MCF 10A (cell line): ENCODE measurements at regions of chr12 and their contacts with region 1.

Region 1: GRCh38 chr12:109428037-109428629 is 49.0 kb downstream of the KCTD10 start:
- DNase-seq: peak; percentile 79
- H3K4me3 Mint-ChIP-seq: no peak overlapping the region
- H3K27ac Mint-ChIP-seq: no peak overlapping the region
- H3K4me1 Mint-ChIP-seq: peaks cover 7% of the 10 kb centered on the region
- H3K27me3 Mint-ChIP-seq: peaks cover 16% of the 10 kb centered on the region
- CTCF ChIP-seq: peak; percentile 91

Region 2: GRCh38 chr12:108821407-108822397 is 606.4 kb before region 1 on chr12:
- CTCF ChIA-PET with region 1: no interaction called
- POLR2A ChIA-PET with region 1: no interaction called
- intact Hi-C with region 1: no loop called
- DNase-seq: peak; percentile 60
- H3K4me3 Mint-ChIP-seq: no peak overlapping the region
- H3K27ac Mint-ChIP-seq: peak overlapping the region; percentile 72
- H3K4me1 Mint-ChIP-seq: peaks cover 16% of the 10 kb centered on the region
- H3K27me3 Mint-ChIP-seq: no peaks in the 10 kb centered on the region
- CTCF ChIP-seq: no peak

Region 3: DNA sequence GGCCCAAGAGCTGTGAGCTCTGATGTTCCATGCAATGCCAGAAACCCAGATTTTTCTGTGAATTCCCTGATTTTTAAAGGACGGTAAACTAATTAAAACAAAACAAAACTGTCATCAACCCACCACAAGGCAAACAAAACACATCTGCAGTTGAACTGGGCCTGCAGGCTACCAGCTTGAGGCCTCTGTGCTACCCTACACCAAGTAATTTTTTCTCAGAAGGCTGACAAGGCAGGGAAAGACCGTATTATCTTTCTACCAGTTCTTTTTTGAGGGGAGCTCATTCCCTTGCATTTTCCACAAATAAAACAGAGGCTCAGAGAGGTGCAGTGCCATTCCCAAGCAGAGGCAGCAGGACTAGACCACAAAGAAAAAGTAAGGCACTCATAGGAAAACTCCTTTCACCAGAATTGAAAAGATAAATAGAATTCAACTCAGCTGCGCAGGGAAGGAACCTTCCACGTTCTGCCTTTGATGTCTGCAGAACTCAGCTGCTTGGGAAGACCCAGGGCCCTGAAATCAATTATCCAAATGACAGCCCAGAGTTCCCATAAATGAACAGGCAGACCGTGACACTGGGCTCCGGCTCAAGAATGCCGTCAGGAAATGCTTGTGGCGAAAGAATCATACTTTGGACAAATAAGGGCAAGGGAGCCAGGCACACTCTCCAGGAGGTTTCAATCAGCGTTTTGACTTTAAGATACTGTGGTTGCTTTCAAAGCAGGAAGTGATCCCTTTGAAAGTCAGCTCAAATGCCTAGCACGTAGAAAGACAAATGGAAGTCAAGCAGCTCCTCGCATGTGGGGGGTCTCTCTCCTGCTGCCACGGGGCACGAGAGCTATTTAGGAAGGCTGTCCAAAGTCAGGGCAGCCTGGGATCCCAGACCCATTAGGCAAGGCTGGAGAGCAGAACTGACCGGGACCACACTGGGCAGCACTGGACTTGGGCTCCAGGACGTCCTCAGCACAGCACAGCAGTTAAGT is 34.9 kb after region 1 on chr12:
- CTCF ChIA-PET with region 1: interaction called, 13 read pairs
- POLR2A ChIA-PET with region 1: interaction called, 18 read pairs
- intact Hi-C with region 1: loop called (anchors 1 kb)
- DNase-seq: peak; percentile 91
- H3K4me3 Mint-ChIP-seq: peak overlapping the region; percentile 41
- H3K27ac Mint-ChIP-seq: peak overlapping the region; percentile 97
- H3K4me1 Mint-ChIP-seq: peaks cover 52% of the 10 kb centered on the region
- H3K27me3 Mint-ChIP-seq: no peaks in the 10 kb centered on the region
- CTCF ChIP-seq: no peak

Region 4: DNA sequence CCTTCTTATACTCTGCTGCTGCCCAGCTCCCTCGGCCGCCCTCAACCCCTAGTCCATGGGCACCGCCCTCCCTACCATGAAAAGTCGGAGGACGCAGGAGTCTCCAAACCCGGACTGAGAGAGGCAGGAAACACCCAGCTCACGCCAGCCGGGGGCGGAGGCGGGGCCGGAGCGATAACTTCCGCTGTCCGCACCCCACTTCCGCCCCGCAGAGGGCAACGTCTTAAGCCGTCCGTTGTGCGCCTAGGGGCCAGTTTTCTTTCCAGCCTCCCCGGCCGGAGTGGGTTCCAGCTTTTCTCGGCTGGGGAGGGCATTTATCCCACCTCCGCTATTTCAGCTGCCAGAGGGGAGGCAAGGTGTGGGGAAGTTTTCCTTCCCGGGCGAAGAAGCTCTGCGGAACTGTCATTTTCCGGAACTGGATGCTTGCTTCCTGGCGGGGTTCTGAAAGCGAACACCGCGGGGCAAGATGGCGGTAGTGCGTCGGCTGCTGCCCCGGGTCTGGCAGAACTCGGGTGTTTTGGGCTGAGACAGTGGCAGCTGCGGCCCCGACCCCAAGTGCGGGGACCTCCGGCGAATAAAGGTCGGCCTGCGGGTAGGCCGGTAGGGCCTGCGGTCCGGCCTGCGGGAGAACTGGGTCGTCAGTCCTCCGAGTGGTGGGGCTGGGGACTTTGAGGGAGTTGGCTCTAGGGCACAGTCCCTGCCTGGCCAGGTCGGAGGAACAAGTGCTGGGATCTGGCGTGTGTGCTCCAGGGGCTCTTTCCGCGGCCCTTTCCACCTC is 49.2 kb after region 1 on chr12 and contains the starts of genes KCTD10 and UBE3B:
- CTCF ChIA-PET with region 1: interaction called, 8 read pairs
- POLR2A ChIA-PET with region 1: interaction called, 14 read pairs
- intact Hi-C with region 1: loop called (anchors 1 kb)
- DNase-seq: peak; percentile 88
- H3K4me3 Mint-ChIP-seq: peak within 1 kb of the TSS; percentile 88
- H3K27ac Mint-ChIP-seq: peak within 1 kb of the TSS; percentile 100
- H3K4me1 Mint-ChIP-seq: peaks cover 3% of the 10 kb centered on the region
- H3K27me3 Mint-ChIP-seq: no peaks in the 10 kb centered on the region
- CTCF ChIP-seq: no peak
- total RNA-seq, gene KCTD10: 44.9 and 45.7 TPM in 2 replicates
- total RNA-seq, gene UBE3B: 38.6 and 40.0 TPM in 2 replicates

Region 5: DNA sequence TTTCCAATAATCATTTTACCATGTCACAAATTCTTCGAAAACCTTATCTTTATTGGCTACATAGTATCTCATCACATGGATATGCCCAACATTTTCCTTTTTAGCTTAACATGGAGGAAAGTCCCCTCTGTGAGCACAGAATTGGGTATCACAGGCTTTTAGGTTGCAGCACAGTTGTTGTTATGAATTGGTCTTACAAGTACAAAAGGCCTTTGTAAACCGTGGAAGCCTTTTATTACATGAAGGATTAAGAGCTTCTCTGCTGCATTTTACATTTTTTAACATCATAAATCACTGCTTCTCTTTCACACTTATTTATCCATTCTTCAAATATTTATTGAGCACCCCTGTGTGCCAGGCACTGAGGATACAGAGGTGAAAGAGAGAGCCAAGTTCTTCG is 75.5 kb after region 1 on chr12:
- CTCF ChIA-PET with region 1: interaction called, 10 read pairs
- POLR2A ChIA-PET with region 1: no interaction called
- intact Hi-C with region 1: no loop called
- DNase-seq: no peak
- H3K4me3 Mint-ChIP-seq: no peak overlapping the region
- H3K27ac Mint-ChIP-seq: peak overlapping the region; percentile 25
- H3K4me1 Mint-ChIP-seq: no peaks in the 10 kb centered on the region
- H3K27me3 Mint-ChIP-seq: no peaks in the 10 kb centered on the region
- CTCF ChIP-seq: no peak

Region 6: GRCh38 chr12:109775172-109775881 is 347.2 kb after region 1 on chr12:
- CTCF ChIA-PET with region 1: interaction called, 4 read pairs
- POLR2A ChIA-PET with region 1: interaction called, 3 read pairs
- intact Hi-C with region 1: loop called (anchors 1 kb)
- DNase-seq: peak; percentile 77
- H3K4me3 Mint-ChIP-seq: no peak overlapping the region
- H3K27ac Mint-ChIP-seq: no peak overlapping the region
- H3K4me1 Mint-ChIP-seq: peaks cover 12% of the 10 kb centered on the region
- H3K27me3 Mint-ChIP-seq: no peaks in the 10 kb centered on the region
- CTCF ChIP-seq: peak; percentile 95

Region 7: GRCh38 chr12:110234755-110235154 is 806.6 kb after region 1 on chr12:
- CTCF ChIA-PET with region 1: no interaction called
- POLR2A ChIA-PET with region 1: no interaction called
- intact Hi-C with region 1: no loop called
- DNase-seq: no peak
- H3K4me3 Mint-ChIP-seq: no peak overlapping the region
- H3K27ac Mint-ChIP-seq: peak overlapping the region; percentile 16
- H3K4me1 Mint-ChIP-seq: no peaks in the 10 kb centered on the region
- H3K27me3 Mint-ChIP-seq: no peaks in the 10 kb centered on the region
- CTCF ChIP-seq: no peak